ENCODE measurements at regions of chr17 and their contacts with region 1.

Region 1: DNA sequence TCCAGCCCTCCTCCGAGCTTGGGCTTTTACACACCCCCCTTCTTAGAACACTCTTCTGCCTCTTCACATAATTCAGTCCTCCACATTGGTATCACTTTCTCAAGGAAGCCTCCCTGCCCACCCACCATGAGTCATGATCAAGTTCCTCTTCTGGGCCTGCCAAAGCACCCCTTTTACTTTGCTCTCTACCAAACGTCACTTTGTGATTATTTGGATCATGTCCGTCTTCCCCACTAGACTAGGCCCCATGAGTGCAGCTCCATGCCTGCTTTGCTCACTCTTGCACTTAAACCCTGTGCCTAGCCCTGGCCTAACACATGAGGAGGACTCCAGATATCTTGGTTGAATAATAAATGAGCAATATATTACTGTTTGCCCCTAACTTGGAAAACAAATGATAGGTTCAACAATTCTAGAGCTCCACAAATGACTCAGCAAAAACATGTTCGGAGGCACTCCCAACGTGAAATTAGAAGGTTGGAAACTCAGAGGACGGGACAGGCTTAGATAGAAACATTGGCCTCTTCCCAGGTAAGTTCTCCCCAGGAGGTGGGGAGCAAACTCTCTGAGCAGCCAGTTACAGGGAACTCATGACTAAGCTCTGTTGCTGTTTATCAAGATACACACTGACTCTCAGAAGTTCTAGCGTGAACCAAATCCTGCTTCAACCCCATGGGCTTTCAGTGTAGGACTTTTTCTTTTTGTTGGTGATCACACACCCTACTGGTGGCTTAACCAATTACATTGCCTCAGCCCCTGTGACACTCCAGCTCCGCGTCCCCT is 28.3 kb downstream of the G6PC1 start:
- DNase-seq: peak in 1 of 2 experiments; percentile 54
- H3K4me3 ChIP-seq: no peak overlapping the region
- H3K27ac ChIP-seq: peak overlapping the region; percentile 21; the same call in 1 of the 2 replicates
- H3K4me1 ChIP-seq: peaks cover 0 to 5% (median 1%) of the 10 kb centered on the region in 4 experiments; a peak in 3 of 7 replicates
- H3K27me3 ChIP-seq: no peaks in the 10 kb centered on the region
- CTCF ChIP-seq: peak; percentile 38 to 65 (median 62)
- EP300 ChIP-seq: no peak
- POLR2A ChIP-seq: peak in 1 of 2 experiments; percentile 34; a peak in 1 of 3 replicates
- RAD21 ChIP-seq: peak; percentile 72 to 76

Region 2: GRCh38 chr17:42855048-42855596 is 73.8 kb before region 1 on chr17:
- CTCF ChIA-PET with region 1: interaction called, 141 read pairs
- POLR2A ChIA-PET with region 1: interaction called, 73 read pairs
- DNase-seq: no peak
- H3K4me3 ChIP-seq: no peak overlapping the region
- H3K27ac ChIP-seq: no peak overlapping the region
- H3K4me1 ChIP-seq: no peaks in the 10 kb centered on the region
- H3K27me3 ChIP-seq: no peaks in the 10 kb centered on the region
- CTCF ChIP-seq: no peak
- EP300 ChIP-seq: no peak
- POLR2A ChIP-seq: no peak
- RAD21 ChIP-seq: no peak

Region 3: GRCh38 chr17:42906772-42907446 is 22.0 kb before region 1 on chr17:
- CTCF ChIA-PET with region 1: interaction called, 13 read pairs
- POLR2A ChIA-PET with region 1: no interaction called
- DNase-seq: no peak
- H3K4me3 ChIP-seq: no peak overlapping the region
- H3K27ac ChIP-seq: no peak overlapping the region
- H3K4me1 ChIP-seq: no peaks in the 10 kb centered on the region
- H3K27me3 ChIP-seq: no peaks in the 10 kb centered on the region
- CTCF ChIP-seq: no peak
- EP300 ChIP-seq: no peak
- POLR2A ChIP-seq: no peak
- RAD21 ChIP-seq: no peak

Measured in H1 (cell line).